ENCODE measurements at regions of chr1 and their contacts with region 1.

Region 1: DNA sequence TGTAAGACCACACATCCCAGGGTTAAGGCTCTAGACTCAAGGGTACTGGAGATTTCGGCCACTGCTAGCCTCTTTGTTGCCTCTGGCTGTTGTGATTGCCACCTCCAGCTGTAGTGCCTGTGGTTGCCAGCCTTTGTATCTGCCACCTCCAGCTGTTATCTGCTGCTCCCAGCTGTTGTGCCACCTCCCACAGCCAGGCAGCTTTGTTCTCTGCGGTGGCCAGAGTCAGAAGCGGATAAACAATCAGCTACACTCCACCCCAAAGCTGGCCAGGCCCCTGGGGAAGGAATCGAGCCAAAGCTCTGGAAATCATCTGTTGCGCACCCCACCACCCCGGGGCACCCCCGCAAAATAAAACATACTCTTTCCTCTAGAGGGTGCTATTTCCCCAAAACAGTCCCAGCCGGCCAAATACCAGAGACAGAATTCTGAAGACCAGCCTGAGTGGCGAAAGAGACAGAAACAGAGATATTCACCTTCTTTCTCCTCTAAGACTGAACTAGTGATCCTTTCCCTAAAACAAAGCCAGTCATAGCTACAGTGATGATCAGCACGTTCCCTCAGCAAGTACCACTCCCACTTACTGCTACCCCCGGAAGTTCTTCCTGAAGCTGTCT is 14.8 kb upstream of the PIGM start:
- DNase-seq: peak; percentile 84
- H3K4me3 Mint-ChIP-seq: peak overlapping the region; percentile 73
- H3K27ac Mint-ChIP-seq: peak overlapping the region; percentile 64
- H3K4me1 Mint-ChIP-seq: peaks cover 13% of the 10 kb centered on the region
- H3K27me3 Mint-ChIP-seq: peaks cover 28% of the 10 kb centered on the region

Region 2: DNA sequence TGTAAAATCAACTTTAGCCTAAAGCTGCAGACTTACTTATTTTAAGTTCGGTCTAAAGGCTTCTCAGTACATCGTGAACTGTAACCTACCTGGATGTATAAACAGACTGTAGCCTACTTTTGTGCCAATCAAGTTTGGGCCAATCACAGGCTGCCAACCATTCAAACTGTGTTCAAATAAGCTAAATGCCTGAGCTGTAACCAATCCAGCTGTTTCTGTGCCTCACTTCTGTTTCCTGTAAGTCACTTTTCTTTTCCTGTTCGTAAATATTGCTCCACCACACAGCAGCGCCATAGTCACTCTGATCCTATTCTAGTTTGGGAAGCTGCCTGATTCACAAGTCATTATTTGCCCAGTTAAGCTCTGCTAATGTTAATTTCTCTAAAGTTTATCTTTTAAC is 55.1 kb before region 1 on chr1:
- intact Hi-C with region 1: no loop called
- DNase-seq: peak; percentile 64
- H3K4me3 Mint-ChIP-seq: no peak overlapping the region
- H3K27ac Mint-ChIP-seq: no peak overlapping the region
- H3K4me1 Mint-ChIP-seq: peaks cover 3% of the 10 kb centered on the region
- H3K27me3 Mint-ChIP-seq: peaks cover 23% of the 10 kb centered on the region

Region 3: GRCh38 chr1:160083968-160084770 is 37.6 kb after region 1 on chr1:
- intact Hi-C with region 1: loop called (anchors 1 kb)
- DNase-seq: peak; percentile 93
- H3K4me3 Mint-ChIP-seq: peak overlapping the region; percentile 51
- H3K27ac Mint-ChIP-seq: no peak overlapping the region
- H3K4me1 Mint-ChIP-seq: peaks cover 19% of the 10 kb centered on the region
- H3K27me3 Mint-ChIP-seq: peaks cover 34% of the 10 kb centered on the region